Naive thymus-derived CD4-positive, alpha-beta T cell (primary cell): ENCODE measurements at regions of chr5 and their contacts with region 1.

Region 1: GRCh38 chr5:139197710-139198669 is at the start of gene SIL1:
- DNase-seq: peak; percentile 88 to 94 (median 91)
- ATAC-seq: peak; percentile 99
- H3K4me3 ChIP-seq: peak within 1 kb of the TSS; percentile 97
- H3K4me3 Mint-ChIP-seq: peak within 1 kb of the TSS; percentile 83 to 96 (median 90)
- H3K27ac ChIP-seq: peak within 1 kb of the TSS; percentile 89
- H3K27ac Mint-ChIP-seq: peak within 1 kb of the TSS; percentile 86 to 96 (median 91)
- H3K4me1 ChIP-seq: peaks cover 8% of the 10 kb centered on the region in 2 donors
- H3K4me1 Mint-ChIP-seq: peaks cover 17 to 38% (median 26%) of the 10 kb centered on the region in 7 donors
- H3K27me3 ChIP-seq: no peaks in the 10 kb centered on the region
- H3K27me3 Mint-ChIP-seq: no peaks in the 10 kb centered on the region
- total RNA-seq, gene SIL1: 11.9 to 27.1 (median 22.8) TPM

Region 2: DNA sequence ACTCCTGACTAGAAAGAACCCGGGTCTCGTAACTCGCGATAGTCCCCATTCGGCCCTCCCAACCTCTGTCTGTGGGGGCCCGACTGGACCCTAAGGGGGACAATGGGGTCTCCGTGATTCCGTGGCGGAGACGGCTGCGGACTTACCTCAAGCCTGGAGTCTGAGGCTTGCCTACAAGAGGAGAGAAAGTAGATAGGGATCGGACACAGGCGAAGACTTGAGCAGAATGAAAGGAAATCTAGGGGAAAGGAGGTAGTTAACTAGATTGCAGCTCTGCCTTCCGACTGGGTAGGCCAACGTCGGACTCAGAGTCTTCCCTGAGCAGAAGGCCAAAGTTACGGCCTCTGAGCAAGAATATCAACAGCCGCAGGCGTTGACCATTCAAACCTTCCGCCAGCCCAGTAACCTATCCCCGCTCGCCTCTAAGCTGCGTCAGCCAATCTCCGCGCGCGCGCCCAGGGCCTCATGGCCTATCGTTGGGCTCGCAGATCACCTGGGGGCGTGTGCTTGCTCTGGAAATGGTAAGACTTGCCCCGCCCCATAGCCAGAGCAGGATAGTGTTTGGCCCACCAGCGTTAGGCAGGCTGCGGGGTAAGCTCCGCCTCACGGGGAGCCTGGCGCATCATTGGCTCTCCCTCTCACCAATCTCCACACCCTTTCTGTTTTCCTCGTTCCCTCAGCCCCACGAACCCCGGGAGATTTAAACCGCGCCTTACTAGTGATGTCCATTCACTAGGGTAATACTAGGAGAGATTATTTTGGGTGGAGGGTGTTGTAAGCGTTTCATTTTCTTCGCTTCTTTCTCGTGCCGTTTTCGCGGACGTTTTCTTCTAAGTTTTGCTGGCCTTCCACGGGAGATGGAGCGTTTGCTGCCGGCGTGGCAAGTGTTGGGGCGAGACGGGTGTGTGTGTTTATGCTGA is 866.3 kb before region 1 on chr5 and contains the start of gene CDC25C:
- CTCF ChIA-PET with region 1: no interaction called
- POLR2A ChIA-PET with region 1: no interaction called
- intact Hi-C with region 1: loop called in 1 of 2 experiments (anchors 5 kb)
- DNase-seq: peak; percentile 87 to 98 (median 96)
- ATAC-seq: peak; percentile 100
- H3K4me3 ChIP-seq: peak within 1 kb of the TSS; percentile 85
- H3K4me3 Mint-ChIP-seq: peak within 1 kb of the TSS; percentile 83 to 95 (median 86)
- H3K27ac ChIP-seq: peak within 1 kb of the TSS; percentile 49
- H3K27ac Mint-ChIP-seq: peak within 1 kb of the TSS; percentile 48 to 92 (median 68)
- H3K4me1 ChIP-seq: peaks cover 1 to 7% of the 10 kb centered on the region in 2 donors
- H3K4me1 Mint-ChIP-seq: peaks cover 7 to 35% (median 14%) of the 10 kb centered on the region in 7 donors
- H3K27me3 ChIP-seq: no peaks in the 10 kb centered on the region
- H3K27me3 Mint-ChIP-seq: no peaks in the 10 kb centered on the region
- total RNA-seq, gene CDC25C: 9.8 TPM in 1 of 5 experiments, not detected in the others

Region 3: GRCh38 chr5:138641547-138642298 is 556.3 kb before region 1 on chr5:
- CTCF ChIA-PET with region 1: no interaction called
- POLR2A ChIA-PET with region 1: no interaction called
- intact Hi-C with region 1: loop called in 1 of 2 experiments (anchors 10 kb)
- DNase-seq: peak; percentile 16 to 78 (median 47)
- ATAC-seq: peak; percentile 82
- H3K4me3 ChIP-seq: no peak overlapping the region
- H3K4me3 Mint-ChIP-seq: no peak overlapping the region
- H3K27ac ChIP-seq: no peak overlapping the region
- H3K27ac Mint-ChIP-seq: no peak overlapping the region
- H3K4me1 ChIP-seq: no peaks in the 10 kb centered on the region
- H3K4me1 Mint-ChIP-seq: peaks cover 0 to 3% (median 0%) of the 10 kb centered on the region in 7 donors
- H3K27me3 ChIP-seq: peaks cover 6 to 14% of the 10 kb centered on the region in 2 donors
- H3K27me3 Mint-ChIP-seq: peaks cover 64 to 89% (median 89%) of the 10 kb centered on the region in 5 donors

Region 4: DNA sequence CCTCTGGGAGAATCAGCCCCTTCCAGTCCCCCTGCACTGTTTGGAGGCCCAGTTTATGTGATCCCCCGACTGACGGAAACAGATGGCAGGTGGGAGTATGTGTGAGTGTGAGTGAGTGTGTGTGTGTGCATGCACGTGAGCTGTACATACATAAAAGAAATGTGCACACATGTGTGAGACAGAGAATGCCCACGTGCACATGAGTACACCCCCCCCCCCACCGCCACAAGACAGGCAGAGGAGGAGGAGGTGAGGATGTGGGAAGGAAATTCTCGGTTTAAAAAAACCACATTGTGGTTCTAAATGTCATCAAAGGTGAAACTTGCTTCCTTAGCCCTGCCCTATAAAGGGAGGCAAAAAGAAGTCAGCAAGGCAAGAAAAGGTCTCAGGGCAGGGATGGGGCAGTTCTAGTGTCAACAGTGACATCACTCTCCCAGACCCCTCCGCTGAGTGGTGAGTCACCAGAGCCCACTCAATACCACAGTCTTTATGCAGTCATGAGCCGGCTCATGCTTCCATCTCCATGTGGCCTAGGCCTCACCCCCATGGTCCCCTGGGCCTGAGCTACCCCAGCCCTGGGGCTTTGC is 543.6 kb before region 1 on chr5:
- CTCF ChIA-PET with region 1: no interaction called
- POLR2A ChIA-PET with region 1: interaction called, 3 read pairs
- intact Hi-C with region 1: loop called (anchors 5 to 10 kb)
- DNase-seq: peak in 8 of 9 donors; percentile 63 to 84 (median 80)
- ATAC-seq: peak; percentile 88
- H3K4me3 ChIP-seq: no peak overlapping the region
- H3K4me3 Mint-ChIP-seq: peak overlapping the region; percentile 4 to 72 (median 36)
- H3K27ac ChIP-seq: no peak overlapping the region
- H3K27ac Mint-ChIP-seq: peak overlapping the region in 8 of 9 donors; percentile 44 to 93 (median 80)
- H3K4me1 ChIP-seq: peaks cover 15 to 26% of the 10 kb centered on the region in 2 donors
- H3K4me1 Mint-ChIP-seq: peaks cover 17 to 34% (median 27%) of the 10 kb centered on the region in 7 donors
- H3K27me3 ChIP-seq: peaks cover 0 to 36% of the 10 kb centered on the region in 2 donors
- H3K27me3 Mint-ChIP-seq: peaks cover 80 to 92% (median 86%) of the 10 kb centered on the region in 5 donors

Region 5: DNA sequence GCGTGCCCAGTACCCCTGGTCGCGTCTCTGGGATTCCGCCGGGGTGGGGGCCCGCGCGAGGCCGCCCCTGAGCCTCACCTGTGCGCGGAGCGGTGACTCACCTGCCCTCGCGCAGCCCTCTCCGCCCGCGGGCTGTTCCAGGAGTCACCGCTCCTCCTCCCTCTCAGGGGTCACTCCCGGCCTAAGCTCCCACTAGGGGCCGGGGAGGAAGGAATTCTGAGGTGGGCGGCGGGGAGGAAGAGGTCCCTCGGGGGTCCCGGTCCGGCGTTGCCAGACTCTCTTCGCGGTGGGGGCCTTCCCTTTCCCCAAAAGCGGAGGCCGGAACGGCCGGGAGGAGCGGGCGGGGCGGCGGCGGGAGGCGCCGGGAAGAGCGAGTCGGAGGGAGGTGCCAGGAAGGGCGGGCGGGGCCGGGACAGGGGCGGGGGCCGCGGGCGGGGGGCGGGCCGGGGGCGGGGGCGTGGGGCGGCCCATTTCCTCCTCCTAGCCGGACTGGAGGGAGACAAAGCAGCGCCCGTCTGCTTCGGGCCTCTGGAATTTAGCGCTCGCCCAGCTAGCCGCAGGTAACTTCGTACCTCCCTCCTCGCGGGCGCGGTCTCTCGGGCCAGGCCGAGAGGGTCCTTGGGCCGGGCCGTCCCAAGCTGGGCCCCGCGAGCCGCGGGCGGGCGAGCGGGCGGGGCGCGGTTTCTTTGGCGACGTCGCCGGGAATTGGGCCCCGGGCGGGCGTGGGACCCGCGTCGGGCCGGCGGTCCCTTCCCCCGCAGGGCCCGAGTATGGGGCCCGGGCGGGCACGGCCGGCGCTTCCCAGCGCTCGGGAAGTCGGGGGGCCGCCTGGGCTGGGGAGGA is 444.8 kb before region 1 on chr5 and contains the start of gene CTNNA1:
- CTCF ChIA-PET with region 1: no interaction called
- POLR2A ChIA-PET with region 1: no interaction called
- intact Hi-C with region 1: loop called in 1 of 2 experiments (anchors 5 kb)
- DNase-seq: peak in 4 of 9 donors; percentile 11 to 67 (median 16)
- ATAC-seq: peak; percentile 68
- H3K4me3 ChIP-seq: peak within 1 kb of the TSS; percentile 50
- H3K4me3 Mint-ChIP-seq: peak within 1 kb of the TSS; percentile 60 to 89 (median 79)
- H3K27ac ChIP-seq: no peak within 1 kb of the TSS
- H3K27ac Mint-ChIP-seq: peak within 1 kb of the TSS in 5 of 9 donors; percentile 10 to 67 (median 24)
- H3K4me1 ChIP-seq: peaks cover 6 to 7% of the 10 kb centered on the region in 2 donors
- H3K4me1 Mint-ChIP-seq: peaks cover 8 to 23% (median 15%) of the 10 kb centered on the region in 7 donors
- H3K27me3 ChIP-seq: no peaks in the 10 kb centered on the region
- H3K27me3 Mint-ChIP-seq: peaks cover 42 to 51% (median 48%) of the 10 kb centered on the region in 5 donors
- total RNA-seq, gene CTNNA1: 3.7 to 52.9 (median 7.1) TPM

Region 6: GRCh38 chr5:139273572-139274289 is 75.7 kb after region 1 on chr5:
- CTCF ChIA-PET with region 1: no interaction called
- POLR2A ChIA-PET with region 1: interaction called, 4 read pairs
- intact Hi-C with region 1: loop called (anchors 1 kb)
- DNase-seq: peak; percentile 71 to 95 (median 83)
- ATAC-seq: peak; percentile 99
- H3K4me3 ChIP-seq: peak overlapping the region; percentile 71
- H3K4me3 Mint-ChIP-seq: peak overlapping the region; percentile 77 to 92 (median 90)
- H3K27ac ChIP-seq: peak overlapping the region; percentile 69
- H3K27ac Mint-ChIP-seq: peak overlapping the region; percentile 54 to 92 (median 85)
- H3K4me1 ChIP-seq: peaks cover 26 to 27% of the 10 kb centered on the region in 2 donors
- H3K4me1 Mint-ChIP-seq: peaks cover 30 to 54% (median 47%) of the 10 kb centered on the region in 7 donors
- H3K27me3 ChIP-seq: no peaks in the 10 kb centered on the region
- H3K27me3 Mint-ChIP-seq: peaks cover 0 to 3% (median 0%) of the 10 kb centered on the region in 5 donors